Dorsolateral prefrontal cortex (tissue), 120 donors: ENCODE measurements at regions of chr20 and their contacts with region 1.

Region 1: GRCh38 chr20:31822421-31823330 is 3.5 kb downstream of the MYLK2 start:
- DNase-seq: peak; percentile 53 to 91 (median 66)
- H3K4me3 ChIP-seq: peak overlapping the region in 52 of 59 donors; percentile 8 to 62 (median 43)
- H3K27ac ChIP-seq: peak overlapping the region in 6 of 59 donors; percentile 13 to 65 (median 42)
- H3K27me3 ChIP-seq: peaks cover 0 to 3% (median 0%) of the 10 kb centered on the region in 45 donors
- CTCF ChIP-seq: peak; percentile 85 to 100 (median 99)

Region 2: DNA sequence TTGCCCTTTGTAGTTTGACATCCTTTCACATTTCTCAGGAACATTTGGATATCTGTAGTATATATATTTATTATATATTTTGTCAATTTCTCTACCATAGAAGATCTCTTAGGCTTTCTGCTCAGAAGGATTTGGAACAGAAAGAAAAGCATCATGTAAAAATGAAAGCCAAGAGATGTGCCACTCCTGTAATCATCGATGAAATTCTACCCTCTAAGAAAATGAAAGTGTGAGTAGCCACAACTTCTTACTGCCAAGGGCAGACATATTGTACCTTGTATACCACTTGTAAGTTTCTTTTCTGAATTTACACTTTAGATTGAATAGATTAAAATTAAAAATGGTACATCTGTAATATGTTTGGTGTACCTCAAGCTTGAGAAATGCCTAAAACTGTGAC is 52.4 kb before region 1 on chr20:
- intact Hi-C with region 1: no loop called
- DNase-seq: no peak
- H3K4me3 ChIP-seq: no peak overlapping the region
- H3K27ac ChIP-seq: no peak overlapping the region
- H3K27me3 ChIP-seq: no peaks in the 10 kb centered on the region
- CTCF ChIP-seq: no peak

Region 3: DNA sequence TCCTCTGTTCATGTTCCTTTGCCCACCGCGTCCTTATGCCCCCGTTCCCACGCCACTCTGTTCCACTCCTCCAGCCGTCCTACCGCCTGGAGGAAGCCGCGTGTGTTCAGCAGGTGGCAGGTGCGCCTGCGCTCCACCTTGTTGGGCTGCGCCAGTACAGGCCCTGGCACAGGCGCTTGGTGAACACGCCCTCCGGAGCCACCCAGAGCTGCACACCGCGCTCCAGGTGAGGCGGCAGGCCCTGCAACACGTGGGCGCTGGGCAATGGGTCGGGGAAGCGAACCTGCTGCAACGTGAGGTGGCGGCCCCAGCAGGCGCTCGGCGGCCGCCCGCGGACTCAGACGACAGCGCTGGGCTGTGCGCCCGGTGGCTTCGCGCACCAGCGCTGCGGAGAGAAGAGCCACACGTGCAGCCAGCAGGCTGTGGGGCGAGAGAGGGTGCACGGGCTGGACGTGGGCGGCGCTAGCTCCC is 26.8 kb after region 1 on chr20:
- intact Hi-C with region 1: loop called in 1 of 2 experiments (anchors 2 kb)
- DNase-seq: no peak
- H3K4me3 ChIP-seq: no peak overlapping the region
- H3K27ac ChIP-seq: no peak overlapping the region
- H3K27me3 ChIP-seq: peaks cover 0 to 44% (median 15%) of the 10 kb centered on the region in 45 donors
- CTCF ChIP-seq: no peak

Region 4: GRCh38 chr20:32091888-32092346 is 269.2 kb after region 1 on chr20:
- intact Hi-C with region 1: loop called (anchors 5 to 10 kb)
- DNase-seq: peak; percentile 71 to 91 (median 80)
- H3K4me3 ChIP-seq: peak overlapping the region in 1 of 59 donors; percentile 10
- H3K27ac ChIP-seq: no peak overlapping the region
- H3K27me3 ChIP-seq: no peaks in the 10 kb centered on the region
- CTCF ChIP-seq: peak; percentile 74 to 97 (median 90)

Region 5: GRCh38 chr20:32130352-32130751 is 307.7 kb after region 1 on chr20:
- intact Hi-C with region 1: no loop called
- DNase-seq: no peak
- H3K4me3 ChIP-seq: no peak overlapping the region
- H3K27ac ChIP-seq: no peak overlapping the region
- H3K27me3 ChIP-seq: no peaks in the 10 kb centered on the region
- CTCF ChIP-seq: no peak

Region 6: DNA sequence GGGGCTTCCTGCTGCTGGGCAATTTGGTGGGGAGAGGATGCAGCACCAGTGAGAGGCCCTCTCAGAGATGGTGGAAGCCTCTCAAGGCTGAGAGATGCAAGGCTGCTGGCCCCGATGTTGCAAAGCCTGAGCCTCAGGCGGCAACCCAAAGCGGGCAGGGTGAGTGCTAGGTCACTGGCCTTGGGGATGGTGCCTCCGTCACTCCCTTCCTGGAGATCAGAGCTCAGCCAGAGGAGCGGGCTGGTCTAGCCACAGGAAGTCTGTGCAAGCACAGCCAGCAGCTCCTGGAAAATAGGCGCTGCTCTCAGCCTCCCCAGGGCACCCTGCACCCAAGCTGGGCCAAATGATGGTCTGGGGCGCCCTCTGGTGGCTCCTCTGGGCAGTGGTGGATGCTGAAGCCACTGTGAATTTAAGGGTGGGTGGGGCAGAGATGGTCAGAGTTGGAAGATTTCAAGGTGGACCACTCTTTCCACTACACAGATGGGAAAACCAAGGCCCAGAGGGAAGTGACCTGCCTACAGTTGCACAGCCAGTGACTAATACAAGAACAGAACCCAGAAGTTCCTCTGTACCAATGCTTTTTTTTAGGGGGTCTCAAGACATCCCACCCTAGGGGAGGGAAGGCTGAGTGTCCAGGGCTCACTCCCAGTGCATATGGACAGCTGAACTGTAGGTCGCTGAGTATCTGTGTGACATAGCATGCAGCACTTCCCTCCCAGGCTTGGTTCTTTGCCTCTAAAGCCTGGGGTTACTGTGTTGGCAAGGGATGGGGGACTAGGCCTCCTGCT is 830.3 kb after region 1 on chr20:
- intact Hi-C with region 1: loop called in 1 of 2 experiments (anchors 2 kb)
- DNase-seq: peak; percentile 81 to 91 (median 88)
- H3K4me3 ChIP-seq: peak overlapping the region in 3 of 59 donors; percentile 9 to 21 (median 10)
- H3K27ac ChIP-seq: peak overlapping the region in 8 of 59 donors; percentile 14 to 60 (median 39)
- H3K27me3 ChIP-seq: no peaks in the 10 kb centered on the region
- CTCF ChIP-seq: peak in 55 of 56 donors; percentile 90 to 99 (median 97)